Panc1 (cell line): ENCODE measurements at regions of chr1 and their contacts with region 1.

Region 1: GRCh38 chr1:227841096-227841495 is 25.6 kb downstream of the PRSS38 start:
- DNase-seq: no peak
- ATAC-seq: no peak
- H3K4me3 ChIP-seq: no peak overlapping the region
- H3K27ac ChIP-seq: no peak overlapping the region
- H3K4me1 ChIP-seq: no peaks in the 10 kb centered on the region
- H3K27me3 ChIP-seq: no peaks in the 10 kb centered on the region
- CTCF ChIP-seq: no peak

Region 2: DNA sequence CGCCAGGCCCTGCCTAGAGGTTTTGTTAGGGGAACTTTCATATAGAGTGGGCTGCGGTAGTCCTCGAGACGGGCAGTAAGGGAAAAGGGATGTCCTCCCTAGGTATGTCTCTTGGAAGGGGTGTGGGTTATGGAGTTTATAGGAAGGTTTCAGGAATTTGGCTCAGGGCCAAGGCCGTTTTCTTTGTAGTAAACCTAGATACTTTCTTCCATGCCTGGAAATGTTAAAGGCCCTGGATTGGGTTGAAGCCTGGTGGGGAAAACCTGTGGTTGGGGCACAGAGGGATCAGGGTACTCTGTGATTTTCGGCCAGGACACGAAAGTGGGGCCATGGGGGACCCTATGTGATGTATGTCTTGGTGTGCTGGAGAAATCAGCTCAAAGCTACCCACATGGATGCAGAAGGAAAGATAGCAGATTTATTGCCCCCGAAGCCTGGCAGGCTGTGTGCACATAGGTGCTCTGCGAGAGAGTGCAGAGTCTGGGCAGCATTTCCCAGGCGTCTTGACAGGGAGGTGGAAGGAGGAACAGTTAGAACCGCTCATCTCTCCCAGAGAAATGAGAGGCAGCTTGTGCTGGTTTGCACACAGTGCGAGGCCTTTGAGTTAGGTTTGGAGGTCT is 104.2 kb before region 1 on chr1:
- CTCF ChIA-PET with region 1: no interaction called
- POLR2A ChIA-PET with region 1: interaction called, 10 read pairs
- in situ Hi-C with region 1: no loop called
- intact Hi-C with region 1: no loop called
- DNase-seq: no peak
- ATAC-seq: no peak
- H3K4me3 ChIP-seq: peak overlapping the region in 1 of 2 experiments; percentile 80; a peak in 1 of 4 replicates
- H3K27ac ChIP-seq: no peak overlapping the region
- H3K4me1 ChIP-seq: peaks cover 3% of the 10 kb centered on the region; the same call in 1 of the 2 replicates
- H3K27me3 ChIP-seq: no peaks in the 10 kb centered on the region
- CTCF ChIP-seq: no peak